A673 (cell line): ENCODE measurements at regions of chr3 and their contacts with region 1.

Region 1: DNA sequence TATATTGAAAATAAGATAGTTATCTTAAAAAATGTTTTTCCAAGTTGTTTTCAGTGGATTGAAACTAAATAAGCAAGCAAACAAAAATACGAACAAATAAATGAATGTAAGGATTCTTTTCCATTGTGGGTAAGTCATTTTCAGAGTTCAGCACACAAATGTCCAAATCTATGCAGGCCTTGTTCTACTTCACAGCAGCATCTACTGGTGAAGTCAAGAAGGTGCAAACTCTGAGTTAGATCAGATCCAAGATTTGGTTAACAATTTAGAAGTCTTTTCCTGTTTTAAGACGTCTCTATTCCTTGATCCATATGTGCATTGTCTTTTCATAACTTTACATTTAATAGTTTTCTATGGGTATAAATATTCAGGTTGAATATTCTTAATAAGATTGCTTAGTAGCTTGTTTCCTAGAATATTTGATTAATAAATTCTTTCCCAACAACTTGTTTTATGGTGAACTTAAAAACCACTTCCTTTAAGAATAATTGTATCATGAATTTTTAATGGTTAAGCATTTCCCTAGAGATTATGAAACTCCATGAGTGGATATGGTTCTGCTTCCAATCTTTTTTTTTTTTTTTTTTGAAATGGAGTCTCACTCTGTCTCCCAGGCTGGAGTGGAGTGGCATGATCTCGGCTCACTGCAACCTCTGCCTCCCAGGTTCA is 10.5 kb downstream of the PTX3 start:
- DNase-seq: peak; percentile 66
- H3K4me3 ChIP-seq: no peak overlapping the region
- H3K27ac ChIP-seq: no peak overlapping the region
- H3K4me1 ChIP-seq: peaks cover 15% of the 10 kb centered on the region
- H3K27me3 ChIP-seq: no peaks in the 10 kb centered on the region
- CTCF ChIP-seq: peak; percentile 71

Region 2: DNA sequence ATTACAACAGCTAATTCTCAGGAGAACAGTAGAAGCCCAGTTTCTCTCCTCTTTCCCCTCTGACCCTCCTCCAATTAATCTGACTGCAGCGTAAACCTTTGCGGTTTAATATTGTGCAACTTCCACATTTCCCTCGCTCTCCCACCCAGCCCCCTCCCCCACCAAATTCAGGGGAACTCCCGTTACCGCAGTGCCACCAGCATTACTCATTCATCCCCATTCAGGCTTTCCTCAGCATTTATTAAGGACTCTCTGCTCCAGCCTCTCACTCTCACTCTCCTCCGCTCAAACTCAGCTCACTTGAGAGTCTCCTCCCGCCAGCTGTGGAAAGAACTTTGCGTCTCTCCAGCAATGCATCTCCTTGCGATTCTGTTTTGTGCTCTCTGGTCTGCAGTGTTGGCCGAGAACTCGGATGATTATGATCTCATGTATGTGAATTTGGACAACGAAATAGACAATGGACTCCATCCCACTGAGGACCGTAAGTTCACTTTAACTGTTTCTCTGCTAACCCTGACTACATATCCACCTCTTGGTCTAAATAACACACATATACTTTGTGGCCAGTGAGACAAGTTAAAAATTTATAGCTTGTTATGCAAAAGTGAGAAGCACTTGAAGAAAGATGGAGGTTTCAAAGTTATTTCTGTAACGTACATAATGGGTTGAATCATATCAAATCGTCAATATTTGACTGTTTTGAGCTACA is 10.4 kb before region 1 on chr3 and contains the start of gene PTX3:
- CTCF ChIA-PET with region 1: no interaction called
- POLR2A ChIA-PET with region 1: interaction called, 23 read pairs
- intact Hi-C with region 1: no loop called
- DNase-seq: peak; percentile 48
- H3K4me3 ChIP-seq: peak within 1 kb of the TSS; percentile 61
- H3K27ac ChIP-seq: no peak within 1 kb of the TSS
- H3K4me1 ChIP-seq: peaks cover 21% of the 10 kb centered on the region
- H3K27me3 ChIP-seq: peaks cover 3% of the 10 kb centered on the region
- CTCF ChIP-seq: no peak
- total RNA-seq, gene PTX3: 4.3 and 5.4 TPM in 2 replicates